ENCODE measurements at regions of chr14 and their contacts with region 1.

Region 1: DNA sequence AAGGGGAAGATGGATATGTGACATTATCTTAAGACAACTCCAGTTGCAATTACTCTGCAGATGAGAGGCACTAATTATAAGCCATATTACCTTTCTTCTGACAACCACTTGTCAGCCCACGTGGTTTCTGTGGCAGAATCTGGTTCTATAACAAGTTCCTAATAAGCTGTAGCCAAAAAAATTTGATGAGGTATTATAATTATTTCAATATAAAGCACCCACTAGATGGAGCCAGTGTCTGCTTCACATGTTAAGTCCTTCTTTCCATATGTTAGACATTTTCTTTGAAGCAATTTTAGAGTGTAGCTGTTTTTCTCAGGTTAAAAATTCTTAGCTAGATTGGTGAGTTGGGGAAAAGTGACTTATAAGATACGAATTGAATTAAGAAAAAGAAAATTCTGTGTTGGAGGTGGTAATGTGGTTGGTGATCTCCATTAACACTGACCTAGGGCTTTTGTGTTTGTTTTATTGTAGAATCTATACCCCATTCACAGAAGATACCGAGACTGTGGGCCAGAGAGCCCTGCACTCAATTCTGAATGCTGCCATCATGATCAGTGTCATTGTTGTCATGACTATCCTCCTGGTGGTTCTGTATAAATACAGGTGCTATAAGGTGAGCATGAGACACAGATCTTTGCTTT is 36.9 kb downstream of the PSEN1 start:
- DNase-seq: peak in 1 of 2 donors; percentile 8
- H3K4me3 ChIP-seq: no peak overlapping the region
- H3K27ac ChIP-seq: no peak overlapping the region
- H3K4me1 ChIP-seq: no peaks in the 10 kb centered on the region
- H3K27me3 ChIP-seq: no peaks in the 10 kb centered on the region
- CTCF ChIP-seq: peak in 2 of 3 experiments; percentile 20 to 26
- POLR2A ChIP-seq: no peak

Region 2: DNA sequence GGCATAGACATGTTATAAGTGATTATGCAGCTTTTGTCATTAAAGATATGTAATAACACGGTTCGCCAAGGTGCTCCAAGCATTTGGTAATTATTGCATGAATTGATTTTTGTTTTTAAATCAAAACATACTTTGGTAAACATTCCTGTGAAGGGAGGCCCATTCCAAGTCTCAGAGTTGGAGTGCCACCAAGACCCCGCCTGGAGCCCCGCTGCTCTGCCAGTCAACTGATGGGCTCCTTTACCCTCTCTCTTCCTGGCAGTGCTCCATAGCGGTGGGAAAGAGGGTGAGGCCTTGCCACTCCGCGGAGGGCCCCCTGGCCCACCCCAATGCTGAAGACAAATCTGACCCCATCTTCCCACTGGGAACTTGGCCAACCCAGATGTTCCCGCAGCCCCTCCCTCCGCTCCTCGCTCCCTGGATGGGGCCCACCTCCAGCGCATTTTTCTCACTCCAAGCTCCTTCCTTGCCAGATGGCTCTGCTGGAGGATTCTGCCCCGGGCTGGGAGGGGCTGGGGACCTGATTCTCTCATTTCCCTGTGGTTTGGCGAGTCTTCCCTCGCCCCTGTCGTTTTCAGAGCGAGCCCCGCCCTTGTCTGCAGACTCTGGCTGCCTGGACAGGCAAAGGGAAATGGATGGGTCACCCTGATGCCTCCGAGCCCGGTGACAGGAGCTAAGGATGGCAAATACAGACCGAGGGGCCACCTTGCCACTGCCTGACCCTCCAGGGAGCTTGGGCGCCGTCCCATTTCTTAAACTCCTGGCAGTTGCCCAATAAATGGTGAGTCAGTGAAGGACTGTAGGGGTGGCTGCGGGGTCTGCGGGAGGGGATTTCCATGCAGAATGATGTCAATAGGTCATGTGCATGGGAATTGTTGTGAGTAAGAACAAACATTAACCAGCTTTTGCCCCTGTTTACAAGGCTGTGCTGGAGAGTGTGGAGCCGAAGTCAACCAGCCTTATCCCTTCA is 54.9 kb after region 1 on chr14:
- intact Hi-C with region 1: no loop called
- DNase-seq: peak in 1 of 2 donors; percentile 86
- H3K4me3 ChIP-seq: no peak overlapping the region
- H3K27ac ChIP-seq: peak overlapping the region; percentile 37
- H3K4me1 ChIP-seq: peaks cover 36% of the 10 kb centered on the region
- H3K27me3 ChIP-seq: no peaks in the 10 kb centered on the region
- CTCF ChIP-seq: no peak
- POLR2A ChIP-seq: no peak

Region 3: GRCh38 chr14:73283608-73284379 is 110.6 kb after region 1 on chr14:
- intact Hi-C with region 1: loop called (anchors 10 kb)
- DNase-seq: no peak
- H3K4me3 ChIP-seq: no peak overlapping the region
- H3K27ac ChIP-seq: no peak overlapping the region
- H3K4me1 ChIP-seq: no peaks in the 10 kb centered on the region
- H3K27me3 ChIP-seq: no peaks in the 10 kb centered on the region
- CTCF ChIP-seq: no peak
- POLR2A ChIP-seq: no peak

Region 4: GRCh38 chr14:73472185-73473114 is 299.2 kb after region 1 on chr14:
- intact Hi-C with region 1: loop called (anchors 5 kb)
- DNase-seq: no peak
- H3K4me3 ChIP-seq: no peak overlapping the region
- H3K27ac ChIP-seq: no peak overlapping the region
- H3K4me1 ChIP-seq: no peaks in the 10 kb centered on the region
- H3K27me3 ChIP-seq: no peaks in the 10 kb centered on the region
- CTCF ChIP-seq: peak; percentile 51 to 74 (median 51)
- POLR2A ChIP-seq: no peak

Measured in vagina (tissue), 2 donors.